Heart right ventricle (tissue), 16 donors: ENCODE measurements at regions of chr2 and their contacts with region 1.

Region 1: DNA sequence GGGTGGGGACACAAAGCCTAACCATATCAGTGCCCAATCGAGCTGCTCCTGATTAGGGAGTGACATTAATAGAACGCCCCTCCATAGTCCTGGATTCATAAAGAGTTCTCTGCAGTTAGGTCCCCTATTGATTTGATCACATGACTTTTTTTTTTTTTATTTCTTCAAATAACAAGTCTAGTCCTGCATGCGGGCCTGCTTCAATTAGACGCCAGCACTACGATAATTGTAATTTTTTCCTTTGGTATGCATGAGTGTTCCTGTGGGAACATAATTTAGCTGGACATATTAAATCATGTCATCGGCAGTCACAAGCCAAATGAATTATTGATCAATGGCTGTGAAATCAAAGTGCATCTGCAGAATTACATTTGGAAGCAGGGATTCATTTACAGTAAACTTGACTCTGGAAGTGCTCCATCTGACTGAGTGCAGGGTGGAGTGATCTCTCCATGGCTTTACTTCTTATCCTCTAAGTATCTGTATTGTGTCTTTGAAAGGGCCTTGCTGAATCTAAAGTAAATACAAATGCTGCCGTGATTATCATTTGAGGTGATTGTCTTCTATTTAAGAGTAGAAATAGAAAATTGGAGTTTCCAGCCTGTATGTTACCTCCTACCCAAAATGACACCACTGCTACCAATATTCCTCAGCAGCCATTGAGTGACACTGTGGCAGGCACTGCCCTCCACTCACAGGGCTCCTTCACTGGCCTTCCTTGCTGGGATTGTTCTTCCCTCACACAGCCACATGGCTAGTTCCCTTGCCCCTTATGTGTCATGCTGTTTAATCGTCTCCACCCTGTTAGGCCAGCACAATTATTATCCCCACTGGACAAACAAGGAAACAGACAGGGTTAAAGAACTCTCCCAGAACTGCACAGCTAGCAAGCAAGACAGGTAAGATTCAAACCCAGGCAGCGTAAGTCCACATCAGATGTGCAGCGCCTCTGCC is 337.4 kb upstream of the ID2 start:
- DNase-seq: no peak
- ATAC-seq: no peak
- H3K4me3 ChIP-seq: no peak overlapping the region
- H3K27ac ChIP-seq: no peak overlapping the region
- H3K4me1 ChIP-seq: no peaks in the 10 kb centered on the region
- H3K27me3 ChIP-seq: no peaks in the 10 kb centered on the region
- CTCF ChIP-seq: no peak

Region 2: GRCh38 chr2:8421658-8422449 is 77.4 kb after region 1 on chr2:
- intact Hi-C with region 1: loop called in 1 of 10 experiments (anchors 5 kb)
- DNase-seq: no peak
- ATAC-seq: no peak
- H3K4me3 ChIP-seq: no peak overlapping the region
- H3K27ac ChIP-seq: no peak overlapping the region
- H3K4me1 ChIP-seq: peaks cover 0 to 28% (median 0%) of the 10 kb centered on the region in 9 donors
- H3K27me3 ChIP-seq: no peaks in the 10 kb centered on the region
- CTCF ChIP-seq: no peak